ENCODE measurements at regions of chr20 and their contacts with region 1.

Region 1: DNA sequence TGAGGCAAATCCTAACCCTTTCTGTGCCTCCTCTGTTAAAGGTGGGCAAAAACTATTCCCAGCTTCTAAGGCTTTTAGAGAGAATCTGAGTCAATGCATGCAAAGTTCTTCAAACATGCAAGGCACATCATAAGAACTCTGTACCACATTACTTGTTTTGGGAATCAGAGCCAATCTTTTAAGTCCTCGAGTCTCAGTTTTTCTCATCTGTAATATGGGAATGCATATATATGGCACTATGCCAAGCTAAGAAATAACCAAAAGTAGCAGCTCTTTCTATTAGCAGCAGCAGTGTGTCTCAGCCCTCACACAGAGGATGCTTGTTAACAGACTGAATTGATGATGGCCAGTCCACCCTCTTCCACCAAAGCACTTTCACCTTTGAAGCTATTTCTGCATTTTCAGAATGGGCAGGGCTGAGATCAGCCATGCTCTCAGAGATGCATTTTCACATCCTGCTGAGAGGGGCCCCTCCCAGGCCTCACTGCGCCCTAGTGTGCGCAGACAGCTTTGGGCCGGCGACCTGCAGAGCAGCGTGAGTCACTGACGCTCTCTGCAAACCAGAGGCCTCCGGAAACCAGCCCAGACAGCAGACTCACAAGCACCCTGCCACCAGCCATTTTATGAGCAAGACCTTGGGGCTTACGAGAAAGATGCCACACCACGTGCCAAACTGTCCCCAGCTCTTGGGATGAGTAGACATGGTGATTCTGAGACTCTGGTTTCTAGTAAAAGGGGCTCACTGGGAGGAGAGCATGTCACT is 138.0 kb downstream of the NFATC2 start:
- DNase-seq: peak; percentile 87
- H3K4me3 Mint-ChIP-seq: no peak overlapping the region
- H3K27ac Mint-ChIP-seq: peak overlapping the region; percentile 93
- H3K4me1 Mint-ChIP-seq: peaks cover 64% of the 10 kb centered on the region
- H3K27me3 Mint-ChIP-seq: no peaks in the 10 kb centered on the region

Region 2: DNA sequence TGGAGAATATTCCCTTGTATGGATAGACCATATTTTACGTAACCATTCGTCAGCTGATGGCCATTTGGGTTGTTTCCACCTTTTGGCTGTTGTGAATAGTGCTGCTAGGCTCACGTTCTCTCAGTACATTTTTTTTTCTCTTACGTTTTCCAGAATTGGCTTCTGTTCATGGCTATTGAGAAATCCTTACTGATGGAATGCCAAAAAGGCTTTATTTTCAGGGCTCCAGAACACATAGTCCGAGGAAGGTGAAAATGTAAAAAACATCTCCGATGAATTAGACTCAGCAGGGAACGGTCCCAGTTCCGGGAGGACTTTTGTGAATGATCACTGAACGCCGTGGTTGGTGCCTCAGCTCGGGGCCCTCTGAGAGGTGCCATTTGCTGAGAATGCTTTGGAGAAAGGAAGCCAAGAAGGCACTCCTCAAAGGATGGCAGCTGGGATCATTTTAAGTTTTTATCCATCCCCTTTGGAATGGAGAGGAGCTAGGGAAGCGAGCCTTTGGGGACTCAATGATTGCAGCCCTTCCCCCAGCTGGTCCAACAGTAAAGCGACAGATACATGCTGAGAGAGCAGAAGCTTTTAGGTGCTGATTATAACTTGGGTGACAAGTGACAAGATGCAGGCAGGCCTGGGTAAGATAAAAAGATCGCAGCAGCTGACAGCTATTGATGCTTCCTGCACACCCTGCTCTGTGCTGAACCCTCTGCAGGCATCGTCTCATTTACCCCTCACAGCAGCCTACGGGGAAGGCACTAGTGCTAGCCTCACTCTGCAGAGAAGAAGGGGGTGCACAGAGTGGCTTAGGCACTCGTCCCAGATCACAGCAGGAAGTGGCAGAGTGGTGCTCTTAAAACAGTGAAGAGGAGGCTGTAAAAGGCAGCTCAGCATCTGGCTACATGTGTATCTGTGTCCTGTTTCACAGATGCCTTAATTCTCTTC is 248.2 kb before region 1 on chr20:
- CTCF ChIA-PET with region 1: no interaction called
- intact Hi-C with region 1: no loop called
- DNase-seq: no peak
- H3K4me3 Mint-ChIP-seq: no peak overlapping the region
- H3K27ac Mint-ChIP-seq: no peak overlapping the region
- H3K4me1 Mint-ChIP-seq: no peaks in the 10 kb centered on the region
- H3K27me3 Mint-ChIP-seq: peaks cover 24% of the 10 kb centered on the region

Region 3: DNA sequence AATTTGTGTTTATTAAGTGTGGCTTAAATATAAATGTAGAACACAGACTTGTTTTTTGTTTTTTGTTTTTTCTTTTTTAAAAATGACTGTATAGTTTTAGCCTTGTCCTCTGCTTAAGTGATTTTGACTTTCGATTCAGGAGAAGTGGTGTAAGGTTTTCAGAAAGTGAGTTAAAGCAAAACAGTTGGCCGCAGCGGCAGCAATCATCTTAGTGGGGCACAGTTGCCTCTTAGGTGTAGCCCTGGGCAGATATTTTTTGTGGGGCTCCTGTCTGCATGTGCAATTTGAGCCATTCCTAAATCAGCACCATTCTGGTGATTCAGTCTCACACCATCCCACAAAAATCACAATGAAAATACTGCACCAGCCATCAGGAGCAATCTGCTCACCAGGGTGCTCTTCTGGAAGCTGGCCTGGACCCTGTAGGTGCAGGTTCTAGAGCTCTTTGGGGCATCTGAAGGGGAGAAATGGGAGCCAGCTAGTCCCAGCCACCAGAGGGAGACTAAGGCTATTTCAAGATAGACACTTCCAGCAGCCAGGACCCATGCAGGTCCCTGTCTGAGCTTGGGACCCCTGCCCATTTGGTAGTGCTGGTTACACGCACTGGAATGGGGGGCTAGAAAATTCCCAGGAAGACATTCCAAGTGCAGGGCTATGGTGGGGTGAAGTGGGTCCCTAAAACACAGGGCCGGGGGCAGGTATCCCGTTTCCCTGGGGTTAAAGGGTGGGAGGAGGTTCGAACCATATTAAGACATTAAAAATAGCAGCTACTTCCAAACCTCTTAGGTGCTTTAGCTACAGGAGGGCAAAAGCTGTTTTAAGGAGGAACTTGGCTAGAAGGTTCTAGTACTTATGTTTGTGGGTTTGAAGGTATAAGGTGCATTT is 18.6 kb before region 1 on chr20:
- CTCF ChIA-PET with region 1: interaction called, 7 read pairs
- intact Hi-C with region 1: loop called (anchors 1 kb)
- DNase-seq: peak; percentile 61
- H3K4me3 Mint-ChIP-seq: no peak overlapping the region
- H3K27ac Mint-ChIP-seq: no peak overlapping the region
- H3K4me1 Mint-ChIP-seq: peaks cover 48% of the 10 kb centered on the region
- H3K27me3 Mint-ChIP-seq: no peaks in the 10 kb centered on the region

Region 4: GRCh38 chr20:51423290-51423667 is 18.8 kb after region 1 on chr20:
- CTCF ChIA-PET with region 1: interaction called, 4 read pairs
- intact Hi-C with region 1: loop called (anchors 1 kb)
- DNase-seq: peak; percentile 44
- H3K4me3 Mint-ChIP-seq: no peak overlapping the region
- H3K27ac Mint-ChIP-seq: no peak overlapping the region
- H3K4me1 Mint-ChIP-seq: peaks cover 42% of the 10 kb centered on the region
- H3K27me3 Mint-ChIP-seq: no peaks in the 10 kb centered on the region

Region 5: DNA sequence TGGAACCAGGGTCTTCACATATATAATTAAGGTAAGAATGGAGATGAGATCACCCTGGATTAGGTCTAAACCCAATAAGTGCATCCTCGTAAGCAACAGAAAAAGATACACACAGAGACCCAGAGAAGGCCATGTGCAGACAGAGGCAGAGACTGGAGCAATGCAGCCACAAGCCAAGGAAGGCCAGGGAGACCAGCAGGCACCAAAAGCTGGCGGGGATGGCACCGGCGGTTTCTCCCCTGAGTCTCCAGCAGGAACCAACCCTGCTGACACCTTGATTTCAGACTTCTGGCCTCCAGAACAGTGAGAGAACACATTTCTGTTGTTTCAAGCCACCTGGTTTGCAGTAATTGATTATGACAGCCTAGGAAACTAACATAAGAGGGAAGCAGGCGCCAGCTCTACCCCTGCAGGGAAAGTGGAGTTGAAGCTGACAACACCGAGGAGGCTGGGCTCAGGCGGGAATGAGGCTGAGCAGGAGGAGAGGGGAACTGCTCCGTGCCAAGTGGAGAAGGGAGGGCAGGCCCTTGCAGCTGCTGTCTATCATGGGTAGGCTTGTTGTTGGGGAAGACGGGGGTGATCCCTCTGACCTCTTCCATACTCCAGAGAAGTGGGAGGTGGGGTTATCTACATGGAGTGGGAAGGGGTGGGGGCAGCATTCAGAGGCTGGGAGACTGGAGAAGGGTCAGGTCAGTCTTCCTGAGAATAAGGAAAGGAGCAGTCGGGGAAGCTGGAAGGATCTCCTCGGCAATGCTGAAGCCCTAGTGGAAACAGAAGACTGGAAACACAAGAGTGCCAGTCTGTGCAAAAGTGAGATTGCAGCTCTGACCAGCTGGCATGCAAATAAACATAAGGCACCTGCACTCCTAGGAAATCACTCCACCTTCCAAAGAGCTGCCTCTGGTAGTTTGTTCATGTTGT is 65.4 kb after region 1 on chr20:
- CTCF ChIA-PET with region 1: no interaction called
- intact Hi-C with region 1: loop called (anchors 1 kb)
- DNase-seq: no peak
- H3K4me3 Mint-ChIP-seq: no peak overlapping the region
- H3K27ac Mint-ChIP-seq: no peak overlapping the region
- H3K4me1 Mint-ChIP-seq: peaks cover 32% of the 10 kb centered on the region
- H3K27me3 Mint-ChIP-seq: no peaks in the 10 kb centered on the region

Region 6: GRCh38 chr20:51492167-51493092 is 88.0 kb after region 1 on chr20:
- CTCF ChIA-PET with region 1: no interaction called
- intact Hi-C with region 1: loop called (anchors 1 kb)
- DNase-seq: no peak
- H3K4me3 Mint-ChIP-seq: no peak overlapping the region
- H3K27ac Mint-ChIP-seq: peak overlapping the region; percentile 93
- H3K4me1 Mint-ChIP-seq: peaks cover 97% of the 10 kb centered on the region
- H3K27me3 Mint-ChIP-seq: no peaks in the 10 kb centered on the region

Region 7: GRCh38 chr20:51500311-51500710 is 95.8 kb after region 1 on chr20:
- CTCF ChIA-PET with region 1: no interaction called
- intact Hi-C with region 1: loop called (anchors 1 kb)
- DNase-seq: peak; percentile 70
- H3K4me3 Mint-ChIP-seq: no peak overlapping the region
- H3K27ac Mint-ChIP-seq: peak overlapping the region; percentile 87
- H3K4me1 Mint-ChIP-seq: peaks cover 68% of the 10 kb centered on the region
- H3K27me3 Mint-ChIP-seq: no peaks in the 10 kb centered on the region

Region 8: GRCh38 chr20:51541189-51542032 is 136.9 kb after region 1 on chr20:
- CTCF ChIA-PET with region 1: no interaction called
- intact Hi-C with region 1: loop called (anchors 1 kb)
- DNase-seq: peak; percentile 91
- H3K4me3 Mint-ChIP-seq: peak overlapping the region; percentile 96
- H3K27ac Mint-ChIP-seq: peak overlapping the region; percentile 98
- H3K4me1 Mint-ChIP-seq: peaks cover 42% of the 10 kb centered on the region
- H3K27me3 Mint-ChIP-seq: no peaks in the 10 kb centered on the region

Measured in activated naive CD4-positive, alpha-beta T cell treated with anti-CD3 and anti-CD28 coated beads for 36 hours (primary cell).